Breast epithelium (tissue), 4 donors: ENCODE measurements at regions of chr6 and their contacts with region 1.

Region 1: DNA sequence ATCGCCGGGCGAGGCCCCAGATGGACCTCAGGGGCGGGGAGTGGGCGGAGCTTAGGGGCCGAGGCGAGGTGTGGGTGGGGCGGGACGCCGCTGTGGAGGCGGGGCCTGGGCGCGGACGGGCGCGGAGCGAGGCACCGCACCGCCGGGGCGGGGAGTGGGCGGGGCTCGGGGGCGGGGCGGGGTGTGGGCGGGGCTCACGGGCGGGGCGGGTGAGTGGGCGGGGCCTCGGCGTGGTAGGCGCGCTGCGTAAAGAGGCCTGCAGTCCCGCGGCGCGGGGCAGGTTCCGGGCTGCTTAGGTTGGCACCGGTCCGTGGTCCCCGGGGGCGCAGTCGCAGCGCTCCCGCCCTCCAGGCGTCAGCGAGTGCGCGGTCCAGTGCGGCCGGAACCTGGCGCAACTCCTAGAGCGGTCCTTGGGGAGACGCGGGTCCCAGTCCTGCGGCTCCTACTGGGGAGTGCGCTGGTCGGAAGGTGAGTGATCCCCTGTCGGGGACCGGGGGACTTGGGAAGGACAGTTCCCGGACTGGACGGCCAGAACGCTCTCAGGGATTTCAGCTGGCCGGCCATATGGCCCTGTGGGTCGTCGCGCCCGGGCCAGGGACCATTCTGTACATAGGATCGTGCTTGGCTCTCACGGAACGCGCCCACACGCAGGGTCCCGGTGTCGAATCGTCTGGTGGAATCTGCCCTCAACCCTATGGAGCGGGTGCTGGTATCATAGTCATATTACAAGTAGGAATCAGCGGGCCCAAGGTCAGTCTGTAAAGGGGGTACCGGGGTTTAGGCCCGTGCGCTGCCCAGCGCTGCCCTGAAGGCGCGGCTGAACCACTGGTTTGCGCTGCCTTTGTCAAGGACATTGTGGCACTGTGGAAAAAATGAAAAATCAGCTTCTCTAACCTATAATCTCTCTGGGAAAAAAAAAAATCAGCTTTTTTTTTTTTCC is at the start of gene NQO2:
- DNase-seq: peak; percentile 87
- H3K4me3 ChIP-seq: peak within 1 kb of the TSS; percentile 76 to 99 (median 88)
- H3K27ac ChIP-seq: peak within 1 kb of the TSS; percentile 88 to 95
- H3K4me1 ChIP-seq: no peaks in the 10 kb centered on the region
- H3K27me3 ChIP-seq: no peaks in the 10 kb centered on the region
- CTCF ChIP-seq: peak in 1 of 3 donors; percentile 21
- POLR2A ChIP-seq: peak; percentile 77
- total RNA-seq, gene NQO2: 23.6 to 64.6 (median 24.9) TPM

Region 2: DNA sequence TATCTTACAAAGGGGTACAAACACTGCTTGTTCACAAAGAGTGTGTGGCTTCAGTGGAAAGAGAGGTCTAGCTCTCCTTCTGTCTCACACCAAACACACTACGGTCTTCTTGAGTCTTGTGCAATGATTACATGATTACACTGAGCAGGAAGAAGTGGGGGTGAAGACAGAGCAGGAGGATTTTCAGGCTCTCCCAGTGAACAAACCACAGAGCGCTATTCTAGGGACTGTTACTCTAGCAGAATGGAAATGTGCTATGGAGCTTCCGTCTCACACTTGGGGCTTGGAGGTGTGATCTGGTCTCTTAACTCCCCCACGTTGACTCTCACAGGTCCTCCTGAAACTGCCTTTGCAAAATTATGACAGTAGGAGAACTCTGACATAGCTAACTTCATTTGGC is 452.5 kb before region 1 on chr6:
- intact Hi-C with region 1: no loop called
- DNase-seq: no peak
- H3K4me3 ChIP-seq: no peak overlapping the region
- H3K27ac ChIP-seq: no peak overlapping the region
- H3K4me1 ChIP-seq: no peaks in the 10 kb centered on the region
- H3K27me3 ChIP-seq: no peaks in the 10 kb centered on the region
- CTCF ChIP-seq: no peak
- POLR2A ChIP-seq: no peak

Region 3: DNA sequence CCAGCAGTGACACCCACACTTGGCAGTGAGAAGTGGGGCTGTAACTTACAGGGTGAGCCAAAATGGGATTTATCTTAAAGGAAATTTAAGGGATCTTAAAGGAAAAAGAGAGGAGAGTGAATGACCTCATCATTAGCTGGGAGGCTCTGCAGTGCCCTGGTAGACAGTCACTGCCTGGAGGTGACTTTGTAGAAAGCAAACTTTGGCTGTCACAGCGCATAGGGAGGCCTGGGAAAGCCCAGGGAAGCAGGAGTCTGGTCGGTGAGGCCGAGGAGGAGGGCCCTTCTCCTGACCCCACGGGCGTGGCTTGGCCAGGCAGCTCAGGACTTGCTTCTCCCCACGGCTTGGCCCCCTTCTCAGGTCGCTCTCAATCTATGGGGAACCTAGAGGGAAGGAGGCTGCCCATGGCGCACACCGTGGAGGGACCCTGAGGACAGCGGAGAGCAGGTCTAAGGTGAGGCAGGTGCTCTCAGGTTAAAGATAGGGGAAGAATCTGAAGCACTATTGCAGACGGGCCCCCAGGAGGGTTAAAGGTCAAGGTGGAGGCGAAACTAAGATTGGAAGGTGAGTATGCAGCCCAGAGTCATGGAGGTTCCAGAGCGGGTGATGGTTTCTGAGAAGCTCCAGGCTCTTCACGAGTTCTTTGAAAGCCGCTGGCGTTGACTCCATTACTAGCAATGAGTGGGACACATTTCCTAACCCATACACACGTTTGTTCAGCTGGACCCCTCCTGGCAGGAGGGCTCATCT is 52.8 kb after region 1 on chr6:
- intact Hi-C with region 1: loop called (anchors 2 kb)
- DNase-seq: no peak
- H3K4me3 ChIP-seq: no peak overlapping the region
- H3K27ac ChIP-seq: no peak overlapping the region
- H3K4me1 ChIP-seq: peaks cover 0 to 4% of the 10 kb centered on the region in 2 donors
- H3K27me3 ChIP-seq: no peaks in the 10 kb centered on the region
- CTCF ChIP-seq: no peak
- POLR2A ChIP-seq: no peak

Region 4: DNA sequence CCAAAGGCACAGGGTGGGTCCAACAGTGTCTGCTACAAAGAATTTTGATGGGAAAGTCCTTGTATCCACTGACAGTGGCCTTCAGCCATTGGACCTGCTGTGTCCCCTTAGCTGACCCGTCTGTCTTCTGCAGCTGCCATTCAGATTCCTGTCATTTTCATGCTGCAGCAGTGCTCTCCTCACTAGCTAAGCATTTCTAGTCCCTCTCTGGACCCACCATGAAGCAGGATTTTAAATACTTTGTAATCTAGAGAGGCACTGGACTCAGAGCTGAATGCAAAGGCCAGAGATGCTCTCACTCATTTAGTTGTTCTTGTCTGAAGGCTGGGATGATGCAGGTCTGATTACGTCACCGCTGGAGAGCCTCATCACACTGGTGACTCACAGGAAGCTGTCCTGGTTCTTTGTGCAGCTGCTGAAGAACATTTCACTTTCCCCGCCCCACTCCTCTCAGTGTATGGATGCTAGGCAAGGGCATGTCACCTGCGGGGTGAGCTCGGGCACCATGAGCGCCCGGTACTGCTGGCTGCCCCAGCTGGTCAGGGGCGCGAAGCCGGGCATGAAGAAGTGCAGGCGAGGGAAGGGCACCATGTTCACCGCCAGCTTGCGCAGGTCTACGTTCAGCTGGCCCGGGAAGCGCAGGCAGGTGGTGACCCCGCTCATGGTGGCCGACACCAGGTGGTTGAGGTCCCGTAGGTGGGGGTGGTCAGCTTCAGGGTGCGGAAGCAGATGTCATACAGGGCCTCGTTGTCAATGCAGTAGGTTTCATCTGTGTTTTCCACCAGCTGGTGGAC is 176.9 kb after region 1 on chr6:
- intact Hi-C with region 1: no loop called
- DNase-seq: no peak
- H3K4me3 ChIP-seq: no peak overlapping the region
- H3K27ac ChIP-seq: no peak overlapping the region
- H3K4me1 ChIP-seq: no peaks in the 10 kb centered on the region
- H3K27me3 ChIP-seq: no peaks in the 10 kb centered on the region
- CTCF ChIP-seq: no peak
- POLR2A ChIP-seq: no peak